Activated B cell treated with CpG ODN at 0.5 μM for 24 hours (primary cell): ENCODE measurements at regions of chr1 and their contacts with region 1.

Region 1: DNA sequence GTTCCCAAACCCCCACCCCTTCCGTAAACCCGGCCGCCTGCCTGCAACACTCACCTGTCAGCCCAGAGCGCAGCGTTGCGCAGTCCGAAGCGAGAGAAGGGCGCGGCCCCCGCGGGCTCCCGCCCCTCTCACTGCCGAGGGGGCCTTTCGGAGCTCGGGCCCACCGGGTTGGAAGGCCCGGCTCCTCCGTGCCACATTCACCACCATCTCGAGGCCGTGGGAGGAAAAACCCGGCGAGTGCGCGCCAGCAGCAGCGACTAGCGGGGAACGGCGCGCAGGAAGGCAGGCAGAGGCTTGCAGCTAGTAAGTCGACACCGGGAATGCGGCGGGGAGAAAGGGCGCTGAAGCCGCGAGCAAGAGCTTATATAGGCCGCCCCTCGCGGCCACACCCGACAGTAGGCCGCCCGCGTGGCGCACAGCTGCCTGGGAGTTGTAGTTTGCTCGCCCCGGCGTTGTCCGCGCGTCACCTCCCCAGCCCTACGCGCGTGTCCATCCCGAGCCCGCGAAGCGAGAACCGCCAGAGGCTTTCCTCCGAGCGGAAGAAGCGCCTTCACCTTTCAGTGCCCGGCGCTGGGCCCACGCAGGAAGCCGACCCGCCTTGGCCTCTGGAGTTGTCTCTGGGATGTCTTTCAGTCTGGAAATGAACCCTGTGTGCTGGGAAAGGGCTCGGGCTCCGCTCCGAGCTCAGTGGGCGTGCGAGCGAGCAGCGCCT is 10.4 kb upstream of the RAB42 start:
- DNase-seq: peak; percentile 94
- ATAC-seq: peak; percentile 90
- H3K4me3 Mint-ChIP-seq: peak overlapping the region; percentile 96
- H3K27ac Mint-ChIP-seq: peak overlapping the region; percentile 91
- H3K4me1 Mint-ChIP-seq: peaks cover 48% of the 10 kb centered on the region
- H3K27me3 Mint-ChIP-seq: no peaks in the 10 kb centered on the region
- CTCF ChIP-seq: no peak

Region 2: DNA sequence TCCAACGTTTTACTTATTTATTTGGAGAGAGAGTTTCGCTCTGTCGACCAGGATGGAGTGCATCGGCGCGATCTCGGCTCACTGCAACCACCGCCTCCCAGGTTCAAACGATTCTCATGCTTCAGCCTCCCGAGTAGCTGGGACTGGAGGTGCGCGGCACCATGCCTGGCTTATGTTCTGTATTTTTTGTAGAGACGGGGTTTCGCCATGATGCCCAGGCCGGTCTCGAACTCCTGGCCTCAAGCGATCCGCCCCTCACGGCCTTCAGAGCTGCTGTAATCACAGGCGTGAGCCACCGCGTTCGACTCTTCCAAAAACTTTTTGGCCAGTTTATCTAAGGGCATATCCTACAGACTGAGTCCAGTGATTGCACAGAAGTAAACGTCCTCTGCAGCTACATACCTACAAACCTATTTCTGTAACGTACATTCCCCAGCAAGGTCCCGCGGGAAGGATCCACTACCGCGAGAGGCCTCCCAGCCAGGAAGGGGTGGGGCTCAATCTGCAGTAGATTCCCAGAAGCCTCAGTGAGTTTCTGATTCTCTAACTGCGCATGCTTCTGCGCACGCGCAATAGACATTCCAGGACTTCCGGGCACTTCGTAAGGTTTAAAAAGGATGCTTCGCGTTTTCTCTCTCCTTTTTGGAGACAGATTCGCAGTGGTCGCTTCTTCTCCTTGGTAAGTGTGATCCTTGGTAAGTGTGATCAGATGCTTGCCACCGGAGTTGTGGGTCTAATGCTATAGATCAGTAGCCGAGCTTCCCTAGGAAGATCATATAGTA is 76.1 kb before region 1 on chr1 and contains the start of gene RCC1:
- CTCF ChIA-PET with region 1: interaction called, 3 read pairs
- POLR2A ChIA-PET with region 1: interaction called, 190 read pairs
- intact Hi-C with region 1: loop called (anchors 1 kb)
- DNase-seq: peak; percentile 82
- ATAC-seq: peak; percentile 87
- H3K4me3 Mint-ChIP-seq: peak within 1 kb of the TSS; percentile 98
- H3K27ac Mint-ChIP-seq: peak within 1 kb of the TSS; percentile 98
- H3K4me1 Mint-ChIP-seq: peaks cover 38% of the 10 kb centered on the region
- H3K27me3 Mint-ChIP-seq: no peaks in the 10 kb centered on the region
- CTCF ChIP-seq: no peak
- total RNA-seq, gene RCC1: 45.2 and 47.5 TPM in 2 replicates

Region 3: DNA sequence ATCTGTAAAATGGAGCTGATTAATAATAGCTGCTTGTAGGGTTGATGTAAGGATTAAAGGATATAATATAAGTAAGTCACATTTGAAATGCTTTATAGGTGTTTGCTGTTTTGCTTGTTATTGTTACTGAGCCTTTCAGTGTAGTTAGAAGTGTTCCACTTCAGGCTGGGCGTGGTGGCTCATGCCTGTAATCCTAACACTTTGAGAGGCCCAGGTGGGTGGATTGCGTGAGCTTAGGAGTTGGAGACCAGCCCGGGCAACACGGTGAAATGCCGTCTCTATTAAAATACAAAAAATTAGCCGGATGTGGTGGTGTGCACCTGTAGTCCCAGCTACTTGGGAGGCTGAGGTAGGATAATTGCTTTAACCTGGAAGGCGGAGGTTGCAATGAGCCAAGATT is 16.7 kb before region 1 on chr1:
- CTCF ChIA-PET with region 1: no interaction called
- POLR2A ChIA-PET with region 1: interaction called, 13 read pairs
- intact Hi-C with region 1: no loop called
- DNase-seq: no peak
- ATAC-seq: no peak
- H3K4me3 Mint-ChIP-seq: no peak overlapping the region
- H3K27ac Mint-ChIP-seq: no peak overlapping the region
- H3K4me1 Mint-ChIP-seq: no peaks in the 10 kb centered on the region
- H3K27me3 Mint-ChIP-seq: no peaks in the 10 kb centered on the region
- CTCF ChIP-seq: no peak

Region 4: DNA sequence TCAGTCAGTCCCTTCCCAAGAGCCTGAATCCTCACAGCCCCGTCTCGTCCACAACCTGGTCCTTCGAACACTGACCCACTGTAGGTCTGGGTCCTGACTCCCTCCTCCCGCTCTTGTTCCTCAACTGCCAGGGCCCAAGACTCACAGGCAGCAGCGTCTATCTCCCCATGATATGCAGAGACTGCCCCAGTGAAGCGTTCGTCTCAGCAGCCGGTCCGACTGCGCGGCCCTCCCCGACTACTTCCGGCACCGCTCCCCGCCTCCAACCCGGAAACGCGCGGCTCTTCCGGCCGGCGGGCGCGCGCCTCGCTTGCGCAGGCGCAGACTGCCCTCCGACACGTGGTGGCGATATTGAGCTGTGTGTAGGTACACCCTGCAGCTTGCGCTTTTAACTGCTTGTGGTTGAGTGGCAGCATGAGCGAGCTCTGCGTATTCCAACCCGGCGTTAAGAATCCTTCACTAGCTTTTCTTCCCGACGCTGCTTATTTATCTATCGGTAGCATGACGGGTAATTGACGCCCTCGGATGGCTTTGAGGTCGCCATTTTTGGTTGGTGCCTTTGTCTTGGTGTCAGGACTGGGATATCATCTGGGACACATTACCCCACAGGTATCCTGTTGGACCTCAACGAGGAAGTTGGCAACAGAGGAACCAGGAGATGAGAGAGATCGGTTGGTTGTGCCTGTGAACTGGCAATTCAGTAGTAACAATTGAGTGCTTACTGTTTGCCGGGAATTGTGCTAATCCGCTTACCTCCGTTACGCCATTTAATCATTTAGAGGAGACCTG is 61.3 kb after region 1 on chr1 and contains the start of gene TAF12:
- CTCF ChIA-PET with region 1: interaction called, 7 read pairs
- POLR2A ChIA-PET with region 1: interaction called, 106 read pairs
- intact Hi-C with region 1: loop called (anchors 1 kb)
- DNase-seq: peak; percentile 78
- ATAC-seq: peak; percentile 80
- H3K4me3 Mint-ChIP-seq: peak within 1 kb of the TSS; percentile 96
- H3K27ac Mint-ChIP-seq: peak within 1 kb of the TSS; percentile 97
- H3K4me1 Mint-ChIP-seq: peaks cover 50% of the 10 kb centered on the region
- H3K27me3 Mint-ChIP-seq: no peaks in the 10 kb centered on the region
- CTCF ChIP-seq: no peak
- total RNA-seq, gene TAF12: 17.1 and 18.5 TPM in 2 replicates

Region 5: GRCh38 chr1:28736450-28737306 is 155.0 kb after region 1 on chr1 and contains the start of gene YTHDF2:
- CTCF ChIA-PET with region 1: interaction called, 7 read pairs
- POLR2A ChIA-PET with region 1: interaction called, 27 read pairs
- intact Hi-C with region 1: loop called (anchors 2 kb)
- DNase-seq: peak; percentile 96
- ATAC-seq: peak; percentile 93
- H3K4me3 Mint-ChIP-seq: peak within 1 kb of the TSS; percentile 96
- H3K27ac Mint-ChIP-seq: peak within 1 kb of the TSS; percentile 91
- H3K4me1 Mint-ChIP-seq: peaks cover 30% of the 10 kb centered on the region
- H3K27me3 Mint-ChIP-seq: no peaks in the 10 kb centered on the region
- CTCF ChIP-seq: peak; percentile 83
- total RNA-seq, gene YTHDF2: 70.6 and 81.2 TPM in 2 replicates

Region 6: GRCh38 chr1:29029667-29030066 is 448.0 kb after region 1 on chr1:
- CTCF ChIA-PET with region 1: no interaction called
- POLR2A ChIA-PET with region 1: no interaction called
- intact Hi-C with region 1: no loop called
- DNase-seq: no peak
- ATAC-seq: no peak
- H3K4me3 Mint-ChIP-seq: no peak overlapping the region
- H3K27ac Mint-ChIP-seq: no peak overlapping the region
- H3K4me1 Mint-ChIP-seq: no peaks in the 10 kb centered on the region
- H3K27me3 Mint-ChIP-seq: no peaks in the 10 kb centered on the region
- CTCF ChIP-seq: no peak

Region 7: DNA sequence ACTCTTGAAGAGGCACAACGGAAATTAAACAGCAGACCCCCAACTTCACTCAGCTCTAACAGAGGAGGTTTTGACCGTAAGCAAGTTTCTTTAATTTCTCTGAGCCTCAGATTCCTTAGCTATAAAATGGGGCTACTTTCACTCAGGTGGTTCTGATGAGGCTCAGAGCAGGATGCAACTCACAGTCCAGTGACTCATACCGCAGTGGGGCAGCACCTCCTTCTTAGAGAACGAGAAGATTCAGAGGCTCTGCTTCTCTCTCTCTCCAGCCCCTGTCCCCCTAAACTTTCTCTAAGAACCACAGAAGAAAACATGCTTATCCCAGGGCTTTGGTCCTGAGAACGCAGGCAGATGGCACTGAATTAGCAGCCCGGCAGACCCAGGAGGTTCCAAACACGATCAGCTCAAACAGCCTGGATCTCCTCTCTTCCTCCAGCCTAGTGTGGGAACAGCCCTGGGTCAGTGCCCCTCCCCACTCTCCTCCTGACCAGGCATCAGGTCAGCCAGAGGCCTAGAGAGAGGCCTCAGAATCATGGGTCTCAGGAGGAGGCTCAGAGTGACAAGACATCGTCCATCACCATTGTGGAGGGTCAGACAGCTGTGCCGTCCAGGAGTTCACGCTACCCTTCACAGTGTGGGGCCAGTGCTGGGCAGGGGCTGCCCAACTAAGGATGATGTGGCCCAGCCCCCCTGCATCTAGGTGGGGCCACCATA is 1087.6 kb after region 1 on chr1:
- CTCF ChIA-PET with region 1: no interaction called
- POLR2A ChIA-PET with region 1: no interaction called
- intact Hi-C with region 1: no loop called
- DNase-seq: no peak
- ATAC-seq: no peak
- H3K4me3 Mint-ChIP-seq: no peak overlapping the region
- H3K27ac Mint-ChIP-seq: no peak overlapping the region
- H3K4me1 Mint-ChIP-seq: no peaks in the 10 kb centered on the region
- H3K27me3 Mint-ChIP-seq: peaks cover 17% of the 10 kb centered on the region
- CTCF ChIP-seq: no peak